CD8-positive, alpha-beta T cell (primary cell): ENCODE measurements at regions of chr3 and their contacts with region 1.

Region 1: DNA sequence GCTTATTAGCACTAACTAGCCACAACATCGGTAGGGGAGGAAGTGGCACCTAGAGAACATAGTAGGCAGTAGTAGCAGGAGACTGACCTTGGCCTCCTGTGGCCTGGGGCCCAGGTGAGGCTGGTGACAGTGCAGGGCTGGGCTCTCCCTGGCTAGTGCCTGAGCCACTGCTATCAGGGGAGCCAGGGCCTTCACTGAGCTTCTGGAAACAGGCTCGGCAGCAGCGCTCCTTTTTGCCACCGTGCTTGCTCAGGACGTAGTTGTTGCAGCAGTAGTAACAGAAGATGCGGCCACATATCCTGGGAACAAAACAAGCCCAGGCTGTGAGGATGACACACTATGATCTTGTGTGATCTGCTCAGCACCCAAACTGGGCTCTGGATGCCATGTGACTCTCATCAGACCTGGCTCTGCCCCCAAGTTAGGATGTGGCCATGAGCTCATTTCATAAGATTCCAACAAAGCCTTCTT is 15.1 kb downstream of the CXCR6 start:
- DNase-seq: peak in 2 of 9 experiments; percentile 41 to 65
- ATAC-seq: peak; percentile 71
- H3K4me3 ChIP-seq: no peak overlapping the region
- H3K4me3 Mint-ChIP-seq: peak overlapping the region; percentile 45
- H3K27ac ChIP-seq: peak overlapping the region in 1 of 2 experiments; percentile 78
- H3K27ac Mint-ChIP-seq: peak overlapping the region; percentile 79
- H3K4me1 ChIP-seq: peaks cover 4% of the 10 kb centered on the region
- H3K4me1 Mint-ChIP-seq: peaks cover 35% of the 10 kb centered on the region
- H3K27me3 ChIP-seq: no peaks in the 10 kb centered on the region
- H3K27me3 Mint-ChIP-seq: no peaks in the 10 kb centered on the region
- CTCF ChIP-seq: no peak

Region 2: DNA sequence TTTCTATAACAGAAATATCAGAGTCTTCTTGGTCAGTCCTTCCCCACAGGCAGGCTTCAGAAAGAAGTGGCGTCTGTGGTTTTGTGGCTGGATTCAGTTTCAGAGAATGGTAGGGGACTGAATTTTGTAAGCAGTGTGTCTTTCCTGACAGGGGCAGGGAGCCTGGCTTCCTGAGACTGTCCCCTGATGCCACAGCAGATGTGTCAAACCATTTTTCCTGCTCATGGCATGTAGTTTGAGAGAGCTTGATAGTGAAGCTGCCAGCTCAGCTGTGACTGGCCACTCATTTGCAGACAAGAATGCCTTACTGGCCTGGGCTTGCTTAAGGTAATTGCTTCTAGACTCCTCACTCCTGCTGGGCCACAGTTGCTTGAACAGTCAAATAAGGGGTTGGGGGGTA is 543.5 kb before region 1 on chr3:
- CTCF ChIA-PET with region 1: no interaction called
- POLR2A ChIA-PET with region 1: no interaction called
- intact Hi-C with region 1: no loop called
- DNase-seq: no peak
- ATAC-seq: no peak
- H3K4me3 ChIP-seq: no peak overlapping the region
- H3K4me3 Mint-ChIP-seq: no peak overlapping the region
- H3K27ac ChIP-seq: no peak overlapping the region
- H3K27ac Mint-ChIP-seq: no peak overlapping the region
- H3K4me1 ChIP-seq: no peaks in the 10 kb centered on the region
- H3K4me1 Mint-ChIP-seq: peaks cover 2% of the 10 kb centered on the region
- H3K27me3 ChIP-seq: no peaks in the 10 kb centered on the region
- H3K27me3 Mint-ChIP-seq: no peaks in the 10 kb centered on the region
- CTCF ChIP-seq: no peak

Region 3: DNA sequence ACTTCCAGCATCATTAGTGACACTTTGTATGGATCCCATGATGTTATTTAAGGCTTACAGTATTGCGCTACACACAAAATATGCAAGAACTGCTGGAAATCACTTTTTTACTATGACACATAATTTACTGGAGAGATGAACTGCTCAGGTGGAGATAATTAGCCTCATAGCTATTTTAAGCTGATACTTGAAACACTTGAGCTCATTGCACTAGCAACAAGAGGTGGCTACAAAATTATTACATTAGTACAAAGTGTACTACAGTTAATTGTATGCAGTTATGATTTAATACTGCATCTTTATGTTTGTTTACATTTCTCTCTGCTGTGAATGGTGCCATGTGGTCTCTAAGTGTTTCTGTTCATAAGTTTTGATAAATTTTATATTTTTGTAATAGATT is 110.0 kb before region 1 on chr3:
- CTCF ChIA-PET with region 1: no interaction called
- POLR2A ChIA-PET with region 1: no interaction called
- intact Hi-C with region 1: no loop called
- DNase-seq: no peak
- ATAC-seq: no peak
- H3K4me3 ChIP-seq: no peak overlapping the region
- H3K4me3 Mint-ChIP-seq: no peak overlapping the region
- H3K27ac ChIP-seq: no peak overlapping the region
- H3K27ac Mint-ChIP-seq: no peak overlapping the region
- H3K4me1 ChIP-seq: no peaks in the 10 kb centered on the region
- H3K4me1 Mint-ChIP-seq: peaks cover 12% of the 10 kb centered on the region
- H3K27me3 ChIP-seq: no peaks in the 10 kb centered on the region
- H3K27me3 Mint-ChIP-seq: peaks cover 12% of the 10 kb centered on the region
- CTCF ChIP-seq: no peak

Region 4: GRCh38 chr3:45861043-45861719 is 97.2 kb before region 1 on chr3:
- CTCF ChIA-PET with region 1: no interaction called
- POLR2A ChIA-PET with region 1: no interaction called
- intact Hi-C with region 1: no loop called
- DNase-seq: no peak
- ATAC-seq: no peak
- H3K4me3 ChIP-seq: no peak overlapping the region
- H3K4me3 Mint-ChIP-seq: no peak overlapping the region
- H3K27ac ChIP-seq: no peak overlapping the region
- H3K27ac Mint-ChIP-seq: no peak overlapping the region
- H3K4me1 ChIP-seq: peaks cover 9% of the 10 kb centered on the region
- H3K4me1 Mint-ChIP-seq: peaks cover 24% of the 10 kb centered on the region
- H3K27me3 ChIP-seq: peaks cover 0 to 3% of the 10 kb centered on the region in 2 experiments
- H3K27me3 Mint-ChIP-seq: peaks cover 20% of the 10 kb centered on the region
- CTCF ChIP-seq: no peak

Region 5: GRCh38 chr3:45948311-45948781 is 10.0 kb before region 1 on chr3:
- CTCF ChIA-PET with region 1: interaction called, 13 read pairs
- POLR2A ChIA-PET with region 1: interaction called, 29 read pairs
- intact Hi-C with region 1: no loop called
- DNase-seq: no peak
- ATAC-seq: no peak
- H3K4me3 ChIP-seq: no peak overlapping the region
- H3K4me3 Mint-ChIP-seq: no peak overlapping the region
- H3K27ac ChIP-seq: peak overlapping the region in 1 of 2 experiments; percentile 73
- H3K27ac Mint-ChIP-seq: peak overlapping the region; percentile 85
- H3K4me1 ChIP-seq: peaks cover 54% of the 10 kb centered on the region
- H3K4me1 Mint-ChIP-seq: peaks cover 90% of the 10 kb centered on the region
- H3K27me3 ChIP-seq: no peaks in the 10 kb centered on the region
- H3K27me3 Mint-ChIP-seq: no peaks in the 10 kb centered on the region
- CTCF ChIP-seq: no peak

Region 6: DNA sequence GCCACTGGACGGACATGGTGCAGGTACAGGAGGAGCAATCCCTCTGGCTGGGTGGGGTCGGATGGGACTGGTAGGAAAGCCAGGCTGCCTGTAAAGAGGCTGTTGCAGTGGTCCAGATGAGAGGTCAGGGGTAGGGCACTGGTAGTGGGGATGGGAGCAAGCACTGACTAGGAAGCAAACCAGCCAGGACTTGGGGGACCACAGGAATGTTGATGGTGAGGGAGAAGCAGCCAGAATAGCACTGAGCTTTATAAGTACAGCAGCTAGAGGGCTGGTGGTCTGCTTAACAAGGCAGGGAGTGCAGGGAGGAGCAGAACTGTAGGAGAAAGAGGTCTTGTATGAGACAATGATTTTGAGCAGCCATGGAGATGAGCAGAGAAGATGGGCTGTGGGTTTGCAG is 1383.8 kb after region 1 on chr3:
- CTCF ChIA-PET with region 1: no interaction called
- POLR2A ChIA-PET with region 1: no interaction called
- intact Hi-C with region 1: no loop called
- DNase-seq: no peak
- ATAC-seq: no peak
- H3K4me3 ChIP-seq: no peak overlapping the region
- H3K4me3 Mint-ChIP-seq: no peak overlapping the region
- H3K27ac ChIP-seq: no peak overlapping the region
- H3K27ac Mint-ChIP-seq: peak overlapping the region; percentile 34
- H3K4me1 ChIP-seq: no peaks in the 10 kb centered on the region
- H3K4me1 Mint-ChIP-seq: peaks cover 7% of the 10 kb centered on the region
- H3K27me3 ChIP-seq: no peaks in the 10 kb centered on the region
- H3K27me3 Mint-ChIP-seq: no peaks in the 10 kb centered on the region
- CTCF ChIP-seq: no peak